ENCODE measurements at regions of chr6 and their contacts with region 1.

Region 1: DNA sequence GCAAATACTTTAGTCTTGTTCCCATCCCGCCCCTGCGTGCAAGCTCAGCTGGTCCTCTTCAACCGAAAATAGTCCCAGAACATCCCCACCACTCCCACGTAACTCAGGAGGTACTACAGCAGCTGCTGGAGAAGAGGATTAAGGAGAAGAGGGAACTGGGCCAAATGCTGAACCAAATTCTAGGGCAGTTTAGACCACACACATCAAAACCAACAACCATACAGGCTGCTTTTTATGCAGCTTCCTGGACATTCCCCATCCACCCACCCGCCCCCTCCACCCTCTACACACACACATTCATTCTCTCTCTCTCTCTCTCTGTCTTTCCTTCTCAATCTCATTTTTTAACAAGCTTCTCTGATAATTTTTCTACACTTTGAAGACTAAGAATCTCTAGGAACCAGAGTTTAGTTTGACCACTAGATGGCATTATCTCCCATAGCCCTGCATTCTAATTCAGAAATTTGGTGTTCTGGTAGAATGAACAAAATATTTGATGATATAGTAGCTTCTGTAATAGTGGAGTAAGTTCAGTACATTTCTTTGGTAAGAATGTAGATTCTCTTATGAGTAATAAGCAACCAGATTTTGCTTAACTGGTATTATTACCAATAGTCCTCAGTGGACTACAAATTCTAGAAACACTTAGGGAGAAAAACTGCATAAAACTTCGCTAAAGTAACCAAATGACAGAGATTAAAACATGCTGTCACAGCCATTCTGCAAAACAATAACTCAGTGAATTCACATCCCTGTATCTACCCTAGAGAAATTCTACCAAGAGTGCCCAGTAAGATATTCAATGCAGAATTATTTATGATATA is 52.1 kb upstream of the BEND6 start:
- DNase-seq: peak; percentile 49
- H3K4me3 ChIP-seq: no peak overlapping the region
- H3K27ac ChIP-seq: no peak overlapping the region
- H3K4me1 ChIP-seq: peaks cover 10% of the 10 kb centered on the region
- H3K27me3 ChIP-seq: no peaks in the 10 kb centered on the region
- CTCF ChIP-seq: peak; percentile 50 to 52
- POLR2A ChIP-seq: no peak

Region 2: DNA sequence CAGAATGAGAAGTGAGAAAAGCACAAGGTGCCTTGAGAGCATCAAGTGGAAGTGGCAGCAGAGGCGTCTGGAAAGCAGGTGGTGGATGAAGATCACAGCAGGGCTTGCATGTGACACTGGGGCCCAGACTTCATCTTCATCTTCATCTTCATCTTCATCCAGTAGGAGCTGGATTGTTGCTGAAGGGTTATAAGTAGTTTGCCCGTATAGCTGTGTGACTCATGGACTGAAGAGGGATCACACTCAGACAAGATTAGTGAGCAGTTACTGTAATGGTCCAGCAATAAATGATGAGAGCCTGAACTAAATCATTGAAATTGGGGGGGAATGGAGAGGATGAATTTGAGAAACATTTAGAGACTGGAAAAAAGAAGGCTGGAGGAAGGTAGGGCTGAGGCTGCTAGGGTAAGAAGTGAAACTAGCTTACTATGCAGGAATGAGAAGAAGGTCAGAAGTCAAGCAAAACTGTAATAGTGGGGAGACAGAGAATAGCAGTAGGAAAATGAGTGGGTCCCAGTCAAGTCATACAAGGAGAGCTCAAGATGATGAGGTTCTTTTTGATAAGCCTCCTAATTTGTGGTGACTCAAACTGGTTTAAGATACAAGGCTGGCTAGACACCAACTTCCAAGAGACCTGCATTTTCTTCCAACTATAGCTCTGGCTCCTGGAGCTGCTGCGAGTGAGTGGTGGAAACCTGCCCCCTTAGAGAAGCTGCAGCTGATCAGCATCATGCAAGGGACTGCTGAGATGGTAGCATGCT is 40.3 kb before region 1 on chr6:
- CTCF ChIA-PET with region 1: interaction called, 36 read pairs
- POLR2A ChIA-PET with region 1: no interaction called
- dilution Hi-C with region 1: no loop called
- intact Hi-C with region 1: loop called (anchors 5 kb)
- DNase-seq: peak; percentile 31
- H3K4me3 ChIP-seq: no peak overlapping the region
- H3K27ac ChIP-seq: no peak overlapping the region
- H3K4me1 ChIP-seq: peaks cover 57% of the 10 kb centered on the region
- H3K27me3 ChIP-seq: no peaks in the 10 kb centered on the region
- CTCF ChIP-seq: no peak
- POLR2A ChIP-seq: no peak

Region 3: GRCh38 chr6:56913285-56914074 is 10.6 kb after region 1 on chr6:
- CTCF ChIA-PET with region 1: interaction called, 15 read pairs
- POLR2A ChIA-PET with region 1: no interaction called
- dilution Hi-C with region 1: no loop called
- intact Hi-C with region 1: no loop called
- DNase-seq: no peak
- H3K4me3 ChIP-seq: no peak overlapping the region
- H3K27ac ChIP-seq: no peak overlapping the region
- H3K4me1 ChIP-seq: no peaks in the 10 kb centered on the region
- H3K27me3 ChIP-seq: no peaks in the 10 kb centered on the region
- CTCF ChIP-seq: no peak
- POLR2A ChIP-seq: no peak

Region 4: DNA sequence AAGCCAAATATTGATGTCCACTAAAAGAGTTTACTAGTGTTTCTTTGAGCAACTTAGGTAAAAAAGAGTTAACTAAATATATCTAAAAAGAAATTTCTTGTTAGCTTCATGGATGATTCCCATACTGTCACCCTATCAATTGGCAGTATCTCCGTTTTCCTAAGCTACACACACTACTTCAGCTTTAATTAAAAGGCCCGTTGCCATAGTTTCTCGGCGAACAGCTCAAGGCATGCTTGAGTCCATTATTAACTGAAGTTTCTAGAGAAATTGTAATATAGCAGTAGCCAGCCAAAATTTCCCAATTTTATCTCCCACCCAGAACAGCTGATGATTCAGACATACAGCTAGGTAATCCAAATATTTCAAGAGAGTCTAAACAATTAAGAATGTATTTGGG is 32.0 kb after region 1 on chr6:
- CTCF ChIA-PET with region 1: interaction called, 13 read pairs
- POLR2A ChIA-PET with region 1: no interaction called
- dilution Hi-C with region 1: no loop called
- intact Hi-C with region 1: no loop called
- DNase-seq: no peak
- H3K4me3 ChIP-seq: no peak overlapping the region
- H3K27ac ChIP-seq: no peak overlapping the region
- H3K4me1 ChIP-seq: peaks cover 6% of the 10 kb centered on the region
- H3K27me3 ChIP-seq: no peaks in the 10 kb centered on the region
- CTCF ChIP-seq: no peak
- POLR2A ChIP-seq: no peak

Region 5: DNA sequence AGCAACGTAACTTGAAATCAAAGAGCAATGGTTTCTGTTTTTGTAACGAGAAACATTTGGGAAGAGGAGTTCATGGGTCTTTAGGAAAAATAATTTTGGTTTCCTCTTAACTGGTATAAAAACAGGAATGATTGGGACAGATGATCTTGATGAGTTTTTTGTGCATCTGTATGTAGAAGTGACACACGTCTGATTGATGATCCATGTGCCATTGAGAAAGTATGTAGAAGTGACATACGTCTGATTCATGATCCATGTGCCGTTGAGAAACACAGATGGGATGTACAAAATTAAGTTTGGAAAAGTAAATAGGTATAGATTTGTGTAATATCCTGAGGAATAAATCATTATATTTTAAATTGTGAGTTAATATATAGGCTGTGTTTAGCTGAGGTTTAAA is 145.7 kb after region 1 on chr6:
- CTCF ChIA-PET with region 1: interaction called, 7 read pairs
- POLR2A ChIA-PET with region 1: no interaction called
- dilution Hi-C with region 1: no loop called
- intact Hi-C with region 1: loop called (anchors 2 kb)
- DNase-seq: no peak
- H3K4me3 ChIP-seq: no peak overlapping the region
- H3K27ac ChIP-seq: no peak overlapping the region
- H3K4me1 ChIP-seq: peaks cover 10% of the 10 kb centered on the region
- H3K27me3 ChIP-seq: peaks cover 1 to 4% of the 10 kb centered on the region in 2 experiments
- CTCF ChIP-seq: no peak
- POLR2A ChIP-seq: no peak

Region 6: GRCh38 chr6:57316581-57317059 is 413.8 kb after region 1 on chr6:
- CTCF ChIA-PET with region 1: interaction called, 170 read pairs
- POLR2A ChIA-PET with region 1: no interaction called
- dilution Hi-C with region 1: no loop called
- intact Hi-C with region 1: loop called (anchors 1 kb)
- DNase-seq: peak; percentile 94
- H3K4me3 ChIP-seq: peak overlapping the region; percentile 25 to 92 (median 53)
- H3K27ac ChIP-seq: peak overlapping the region; percentile 44
- H3K4me1 ChIP-seq: peaks cover 34% of the 10 kb centered on the region
- H3K27me3 ChIP-seq: no peaks in the 10 kb centered on the region
- CTCF ChIP-seq: peak; percentile 64 to 79
- POLR2A ChIP-seq: no peak